Mammary epithelial cell (primary cell): ENCODE measurements at regions of chr7 and their contacts with region 1.

Region 1: DNA sequence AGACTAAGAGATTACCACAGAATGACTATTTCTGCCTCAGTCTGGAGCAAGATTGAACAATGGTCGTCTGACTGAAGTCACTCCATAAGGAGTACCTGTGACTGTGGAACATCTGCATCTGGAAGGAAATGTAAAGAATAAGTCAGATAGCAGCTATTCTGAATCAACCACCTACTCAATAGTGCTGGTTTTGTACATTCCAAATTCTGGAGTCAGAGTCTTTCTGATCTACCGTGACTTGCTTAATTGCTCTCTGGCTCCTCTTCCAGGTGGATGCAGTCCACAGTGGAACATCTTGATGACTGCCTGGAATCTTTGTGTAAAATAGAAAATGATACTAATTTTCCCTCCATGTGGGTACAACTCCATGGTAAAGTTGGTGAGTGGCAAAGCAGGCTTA is 156.3 kb upstream of the SEMA3C start:
- DNase-seq: peak; percentile 98
- H3K4me3 ChIP-seq: no peak overlapping the region
- H3K27ac ChIP-seq: peak overlapping the region; percentile 93
- H3K4me1 ChIP-seq: peaks cover 26% of the 10 kb centered on the region
- H3K27me3 ChIP-seq: no peaks in the 10 kb centered on the region
- CTCF ChIP-seq: peak; percentile 26 to 58

Region 2: GRCh38 chr7:80934321-80934720 is 140.8 kb before region 1 on chr7:
- CTCF ChIA-PET with region 1: no interaction called
- dilution Hi-C with region 1: no loop called
- in situ Hi-C with region 1: loop called in 1 of 2 experiments (anchors 10 kb)
- intact Hi-C with region 1: no loop called
- DNase-seq: peak; percentile 48
- H3K4me3 ChIP-seq: no peak overlapping the region
- H3K27ac ChIP-seq: peak overlapping the region; percentile 40
- H3K4me1 ChIP-seq: peaks cover 26% of the 10 kb centered on the region
- H3K27me3 ChIP-seq: no peaks in the 10 kb centered on the region
- CTCF ChIP-seq: no peak

Region 3: DNA sequence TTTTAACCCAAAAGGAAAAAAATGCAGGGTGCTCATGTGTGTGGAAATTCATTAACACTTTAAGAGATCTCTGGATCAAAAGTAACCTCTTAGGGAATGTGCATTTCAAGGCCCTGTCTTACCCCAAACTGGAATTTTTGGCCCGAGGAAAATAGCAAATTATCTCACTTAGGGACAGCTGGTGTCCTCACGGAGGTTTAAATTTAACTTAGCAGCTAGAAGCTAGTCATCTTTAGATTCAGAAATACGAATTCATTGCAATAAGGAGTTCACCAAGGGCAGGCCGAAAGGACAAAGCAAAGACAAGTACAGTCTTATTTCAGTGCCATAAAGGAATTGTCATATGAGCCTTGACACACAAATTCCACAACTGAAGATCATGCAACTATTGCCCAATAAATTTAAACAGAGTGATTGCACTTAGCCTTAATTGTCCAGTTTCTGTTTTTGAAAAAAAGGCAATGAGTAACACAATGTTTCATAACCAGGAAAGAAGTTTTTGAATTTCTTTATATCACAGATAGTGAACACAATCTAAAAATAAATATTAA is 133.9 kb before region 1 on chr7:
- CTCF ChIA-PET with region 1: no interaction called
- dilution Hi-C with region 1: no loop called
- in situ Hi-C with region 1: loop called in 1 of 2 experiments (anchors 10 kb)
- intact Hi-C with region 1: loop called (anchors 1 kb)
- DNase-seq: peak; percentile 93
- H3K4me3 ChIP-seq: no peak overlapping the region
- H3K27ac ChIP-seq: peak overlapping the region; percentile 98
- H3K4me1 ChIP-seq: peaks cover 30% of the 10 kb centered on the region
- H3K27me3 ChIP-seq: no peaks in the 10 kb centered on the region
- CTCF ChIP-seq: no peak

Region 4: GRCh38 chr7:81013083-81013817 is 61.9 kb before region 1 on chr7:
- CTCF ChIA-PET with region 1: no interaction called
- dilution Hi-C with region 1: no loop called
- in situ Hi-C with region 1: no loop called
- intact Hi-C with region 1: loop called (anchors 1 kb)
- DNase-seq: peak; percentile 92
- H3K4me3 ChIP-seq: no peak overlapping the region
- H3K27ac ChIP-seq: peak overlapping the region; percentile 82
- H3K4me1 ChIP-seq: peaks cover 17% of the 10 kb centered on the region
- H3K27me3 ChIP-seq: no peaks in the 10 kb centered on the region
- CTCF ChIP-seq: no peak

Region 5: DNA sequence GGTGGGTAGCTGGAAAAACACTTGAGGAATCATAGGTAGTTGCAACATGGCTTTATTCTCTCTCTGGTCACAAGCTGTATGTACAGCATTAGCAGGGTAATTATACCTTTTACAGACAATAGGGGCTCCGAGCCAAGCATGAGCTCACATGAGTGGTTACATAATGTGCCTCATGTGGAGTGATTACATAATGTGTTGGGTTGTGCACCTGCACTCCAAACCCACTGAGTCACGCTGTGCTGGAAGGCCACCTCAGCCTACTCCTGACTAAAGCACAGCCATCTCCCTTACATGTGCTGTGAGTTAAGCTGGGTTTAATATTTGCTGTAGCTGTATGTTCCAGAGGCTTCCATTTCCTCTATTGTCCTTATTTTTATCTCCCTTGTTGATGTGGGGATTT is 192.4 kb after region 1 on chr7:
- CTCF ChIA-PET with region 1: no interaction called
- dilution Hi-C with region 1: no loop called
- in situ Hi-C with region 1: no loop called
- intact Hi-C with region 1: loop called (anchors 5 kb)
- DNase-seq: peak; percentile 97
- H3K4me3 ChIP-seq: no peak overlapping the region
- H3K27ac ChIP-seq: peak overlapping the region; percentile 32
- H3K4me1 ChIP-seq: peaks cover 22% of the 10 kb centered on the region
- H3K27me3 ChIP-seq: no peaks in the 10 kb centered on the region
- CTCF ChIP-seq: no peak

Region 6: DNA sequence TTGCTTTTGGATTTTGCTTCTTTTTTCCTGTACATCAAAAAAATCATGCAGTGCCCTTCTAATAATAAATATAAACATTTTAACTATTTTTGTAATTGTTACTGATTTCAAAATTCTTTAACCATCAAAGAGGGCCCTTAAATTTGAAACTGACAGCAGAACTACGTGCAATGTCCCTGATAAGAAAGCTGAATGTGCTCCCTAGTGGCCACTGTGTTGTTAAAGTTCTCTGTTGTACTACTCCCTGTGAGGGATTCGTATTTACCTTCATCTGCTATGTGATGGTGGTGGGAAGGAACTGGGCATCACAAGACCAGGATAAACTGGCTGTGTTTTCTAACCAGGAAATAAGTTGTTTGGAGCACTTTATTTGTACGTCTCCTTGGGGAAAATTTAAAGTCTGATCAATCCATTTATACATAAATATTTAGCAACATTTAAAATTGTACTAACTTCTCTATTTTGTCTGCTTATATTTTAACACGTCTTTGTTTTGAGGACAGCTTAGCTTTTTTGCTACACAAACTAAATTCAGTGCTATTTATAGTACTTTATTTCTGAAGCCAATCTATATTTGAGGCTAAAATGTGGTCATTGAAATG is 372.3 kb after region 1 on chr7:
- CTCF ChIA-PET with region 1: no interaction called
- dilution Hi-C with region 1: no loop called
- in situ Hi-C with region 1: no loop called
- intact Hi-C with region 1: loop called (anchors 2 kb)
- DNase-seq: peak; percentile 66
- H3K4me3 ChIP-seq: no peak overlapping the region
- H3K27ac ChIP-seq: no peak overlapping the region
- H3K4me1 ChIP-seq: no peaks in the 10 kb centered on the region
- H3K27me3 ChIP-seq: no peaks in the 10 kb centered on the region
- CTCF ChIP-seq: peak; percentile 62 to 69